Left cardiac atrium (tissue), 4 donors: ENCODE measurements at regions of chr1 and their contacts with region 1.

Region 1: GRCh38 chr1:61851849-61852669 is 109.8 kb downstream of the PATJ start:
- DNase-seq: no peak
- ATAC-seq: peak; percentile 72 to 78

Region 2: GRCh38 chr1:60969971-60970509 is 882.0 kb before region 1 on chr1:
- intact Hi-C with region 1: loop called in 1 of 2 experiments (anchors 5 kb)
- DNase-seq: no peak
- ATAC-seq: peak; percentile 59 to 83

Region 3: DNA sequence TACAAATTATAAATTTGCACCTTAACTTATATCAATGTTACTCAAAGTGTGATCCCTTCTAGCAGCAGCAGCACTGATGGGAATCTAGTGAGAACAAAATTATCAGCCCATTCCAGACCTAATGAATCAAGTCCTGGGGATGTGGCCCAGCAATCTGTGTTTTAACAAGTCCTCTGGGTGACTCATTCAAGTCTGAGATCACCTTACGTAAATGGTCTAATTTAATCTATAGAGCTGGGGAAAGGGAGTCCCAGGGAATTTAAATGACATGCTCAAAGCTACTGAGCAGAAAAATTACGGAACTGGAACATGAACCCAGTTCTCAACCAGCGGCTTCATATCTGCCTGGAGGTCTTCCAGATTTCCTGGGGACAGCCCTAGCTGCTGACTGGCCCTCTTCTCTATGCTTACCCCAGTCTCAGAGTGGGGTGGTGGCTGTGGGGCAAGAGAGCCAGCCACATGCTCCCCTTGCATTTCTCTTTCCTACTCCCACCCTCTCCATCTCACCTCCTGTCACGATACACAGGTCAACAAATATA is 347.1 kb before region 1 on chr1:
- intact Hi-C with region 1: no loop called
- DNase-seq: no peak
- ATAC-seq: no peak